ENCODE measurements at regions of chr18 and their contacts with region 1.

Region 1: GRCh38 chr18:1048032-1048431 is 143.4 kb downstream of the ADCYAP1 start:
- DNase-seq: no peak
- ATAC-seq: no peak
- H3K4me3 ChIP-seq: no peak overlapping the region
- H3K27ac ChIP-seq: no peak overlapping the region
- H3K4me1 ChIP-seq: 0 out of 4 replicates have a peak, but pooled peaks cover 0 to 3% of the 10 kb centered on the region in 2 experiments
- H3K27me3 ChIP-seq: no peaks in the 10 kb centered on the region
- CTCF ChIP-seq: no peak
- POLR2A ChIP-seq: no peak
- RAD21 ChIP-seq: no peak

Region 2: DNA sequence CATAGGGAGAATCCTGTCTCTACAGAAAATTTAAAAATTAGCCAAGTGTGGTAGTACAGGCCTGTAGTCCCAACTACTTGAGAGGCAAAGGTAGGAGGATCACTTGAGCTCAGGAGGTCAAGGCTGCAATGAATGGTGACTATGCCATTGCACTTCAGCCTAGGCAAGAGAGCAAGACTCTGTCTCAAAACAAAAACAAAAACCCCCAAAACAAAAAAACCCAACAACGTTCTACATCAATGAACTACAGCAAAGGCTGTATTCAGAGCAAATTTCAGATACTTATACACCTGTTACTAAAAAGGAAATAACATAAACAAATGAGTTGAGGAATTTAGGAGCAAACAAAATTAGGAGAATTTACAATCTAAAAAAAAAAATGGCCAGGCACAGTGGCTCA is 258.6 kb before region 1 on chr18:
- CTCF ChIA-PET with region 1: no interaction called
- POLR2A ChIA-PET with region 1: no interaction called
- RAD21 ChIA-PET with region 1: no interaction called
- intact Hi-C with region 1: no loop called
- DNase-seq: no peak
- ATAC-seq: no peak
- H3K4me3 ChIP-seq: no peak overlapping the region
- H3K27ac ChIP-seq: no peak overlapping the region
- H3K4me1 ChIP-seq: no peaks in the 10 kb centered on the region
- H3K27me3 ChIP-seq: no peaks in the 10 kb centered on the region
- CTCF ChIP-seq: no peak
- POLR2A ChIP-seq: no peak
- RAD21 ChIP-seq: no peak

Region 3: DNA sequence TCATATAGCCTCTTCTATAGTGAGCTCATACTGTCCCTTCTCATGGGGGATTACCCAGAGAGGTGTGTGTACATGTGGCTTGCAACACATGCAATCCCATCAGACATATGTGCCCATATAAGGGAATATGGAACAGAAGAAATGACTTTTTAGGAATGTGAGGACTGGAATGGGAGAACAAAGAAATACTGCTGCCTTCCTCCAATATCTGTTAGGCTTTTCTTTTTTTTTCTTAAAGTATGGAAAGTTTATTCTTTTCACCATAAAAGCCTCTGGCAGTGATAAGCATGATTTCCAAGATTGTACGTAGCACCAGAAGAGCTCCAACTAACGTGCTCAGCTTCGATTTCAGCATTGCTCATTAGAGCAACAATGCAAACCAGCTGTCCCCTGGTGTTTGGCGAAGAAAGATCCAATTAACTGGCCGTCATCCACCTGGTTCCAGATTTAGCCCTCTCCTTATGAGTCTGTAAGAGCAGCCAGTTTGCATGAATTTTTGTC is 29.8 kb before region 1 on chr18:
- CTCF ChIA-PET with region 1: no interaction called
- POLR2A ChIA-PET with region 1: no interaction called
- RAD21 ChIA-PET with region 1: no interaction called
- intact Hi-C with region 1: no loop called
- DNase-seq: no peak
- ATAC-seq: no peak
- H3K4me3 ChIP-seq: no peak overlapping the region
- H3K27ac ChIP-seq: no peak overlapping the region
- H3K4me1 ChIP-seq: no peaks in the 10 kb centered on the region
- H3K27me3 ChIP-seq: no peaks in the 10 kb centered on the region
- CTCF ChIP-seq: no peak
- POLR2A ChIP-seq: no peak
- RAD21 ChIP-seq: no peak

Region 4: GRCh38 chr18:1062588-1062987 is 14.6 kb after region 1 on chr18:
- CTCF ChIA-PET with region 1: no interaction called
- POLR2A ChIA-PET with region 1: no interaction called
- RAD21 ChIA-PET with region 1: no interaction called
- intact Hi-C with region 1: loop called (anchors 2 kb)
- DNase-seq: no peak
- ATAC-seq: no peak
- H3K4me3 ChIP-seq: no peak overlapping the region
- H3K27ac ChIP-seq: no peak overlapping the region
- H3K4me1 ChIP-seq: no peaks in the 10 kb centered on the region
- H3K27me3 ChIP-seq: peaks cover 5% of the 10 kb centered on the region; the same call in 1 of the 2 replicates
- CTCF ChIP-seq: 0 out of 6 replicates have a peak, but pooled peaks of 1 of the 3 experiments have one; percentile 4
- POLR2A ChIP-seq: no peak
- RAD21 ChIP-seq: no peak

Region 5: DNA sequence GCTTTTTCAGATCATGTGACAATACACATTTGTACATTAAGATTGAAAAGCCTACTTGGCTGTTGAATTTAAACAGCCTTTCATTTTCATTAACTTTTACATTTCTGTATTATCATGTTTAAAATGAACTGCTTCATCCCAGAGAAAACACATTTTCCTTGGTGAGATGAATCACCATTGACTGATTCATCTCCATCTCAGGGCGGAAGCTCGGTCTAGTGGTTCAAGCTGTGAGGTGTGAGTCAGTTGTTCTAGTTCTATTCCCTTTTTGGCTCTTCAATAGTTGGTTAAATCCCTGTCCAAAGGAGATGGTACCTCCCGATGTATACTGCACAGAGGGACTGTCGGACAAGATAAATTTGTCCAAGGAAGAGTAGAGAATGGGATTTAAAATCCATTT is 46.4 kb after region 1 on chr18:
- CTCF ChIA-PET with region 1: no interaction called
- POLR2A ChIA-PET with region 1: no interaction called
- RAD21 ChIA-PET with region 1: no interaction called
- intact Hi-C with region 1: loop called (anchors 5 kb)
- DNase-seq: no peak
- ATAC-seq: no peak
- H3K4me3 ChIP-seq: no peak overlapping the region
- H3K27ac ChIP-seq: no peak overlapping the region
- H3K4me1 ChIP-seq: no peaks in the 10 kb centered on the region
- H3K27me3 ChIP-seq: peaks cover 9% of the 10 kb centered on the region
- CTCF ChIP-seq: no peak
- POLR2A ChIP-seq: no peak
- RAD21 ChIP-seq: no peak

Region 6: GRCh38 chr18:1244397-1245122 is 196.5 kb after region 1 on chr18:
- CTCF ChIA-PET with region 1: no interaction called
- POLR2A ChIA-PET with region 1: no interaction called
- RAD21 ChIA-PET with region 1: no interaction called
- intact Hi-C with region 1: no loop called
- DNase-seq: no peak
- ATAC-seq: no peak
- H3K4me3 ChIP-seq: no peak overlapping the region
- H3K27ac ChIP-seq: no peak overlapping the region
- H3K4me1 ChIP-seq: no peaks in the 10 kb centered on the region
- H3K27me3 ChIP-seq: no peaks in the 10 kb centered on the region
- CTCF ChIP-seq: no peak
- POLR2A ChIP-seq: no peak
- RAD21 ChIP-seq: no peak

Region 7: GRCh38 chr18:1559563-1559962 is 511.5 kb after region 1 on chr18:
- CTCF ChIA-PET with region 1: no interaction called
- POLR2A ChIA-PET with region 1: no interaction called
- RAD21 ChIA-PET with region 1: no interaction called
- intact Hi-C with region 1: no loop called
- DNase-seq: no peak
- ATAC-seq: peak; percentile 57
- H3K4me3 ChIP-seq: no peak overlapping the region
- H3K27ac ChIP-seq: no peak overlapping the region
- H3K4me1 ChIP-seq: no peaks in the 10 kb centered on the region
- H3K27me3 ChIP-seq: peaks cover 7% of the 10 kb centered on the region; the same call in 1 of the 2 replicates
- CTCF ChIP-seq: no peak
- POLR2A ChIP-seq: no peak
- RAD21 ChIP-seq: no peak

Measured in HCT116 (cell line).